Prostate gland (tissue), 2 donors: ENCODE measurements at regions of chr1 and their contacts with region 1.

Region 1: DNA sequence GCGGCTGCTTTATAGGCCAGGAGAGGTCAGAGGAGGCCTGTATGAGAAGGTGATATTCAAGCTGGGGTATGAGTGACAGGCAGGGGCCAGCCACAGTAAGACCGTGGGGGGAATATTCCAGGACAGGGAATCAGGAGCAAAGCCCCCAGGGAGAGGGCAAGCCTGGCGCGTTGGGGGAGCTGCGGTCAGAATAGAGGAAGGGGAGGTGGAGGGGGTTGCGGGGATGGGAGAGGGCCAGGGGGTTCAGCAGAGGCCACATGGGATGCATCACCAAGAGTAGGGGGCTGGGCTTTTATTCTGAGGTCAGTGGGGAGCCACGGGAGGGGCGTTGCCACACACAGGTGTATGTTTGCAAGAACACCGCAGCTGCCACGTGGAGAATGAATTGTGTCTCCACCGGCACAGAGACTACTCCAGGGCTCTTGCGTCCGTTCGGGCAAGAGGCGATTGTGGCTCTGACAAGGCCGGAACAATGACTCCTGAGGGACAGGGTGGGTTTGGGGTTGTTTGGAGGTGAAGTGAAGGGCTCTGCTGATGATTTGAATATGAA is 84.7 kb upstream of the VAMP3 start:
- DNase-seq: no peak
- H3K4me3 ChIP-seq: no peak overlapping the region
- H3K27ac ChIP-seq: no peak overlapping the region
- H3K4me1 ChIP-seq: no peaks in the 10 kb centered on the region
- H3K27me3 ChIP-seq: no peaks in the 10 kb centered on the region
- CTCF ChIP-seq: no peak
- POLR2A ChIP-seq: no peak

Region 2: GRCh38 chr1:7733276-7733675 is 46.9 kb after region 1 on chr1:
- intact Hi-C with region 1: loop called (anchors 5 kb)
- DNase-seq: no peak
- H3K4me3 ChIP-seq: no peak overlapping the region
- H3K27ac ChIP-seq: no peak overlapping the region
- H3K4me1 ChIP-seq: no peaks in the 10 kb centered on the region
- H3K27me3 ChIP-seq: no peaks in the 10 kb centered on the region
- CTCF ChIP-seq: no peak
- POLR2A ChIP-seq: no peak